ENCODE measurements at regions of chr7 and their contacts with region 1.

Region 1: DNA sequence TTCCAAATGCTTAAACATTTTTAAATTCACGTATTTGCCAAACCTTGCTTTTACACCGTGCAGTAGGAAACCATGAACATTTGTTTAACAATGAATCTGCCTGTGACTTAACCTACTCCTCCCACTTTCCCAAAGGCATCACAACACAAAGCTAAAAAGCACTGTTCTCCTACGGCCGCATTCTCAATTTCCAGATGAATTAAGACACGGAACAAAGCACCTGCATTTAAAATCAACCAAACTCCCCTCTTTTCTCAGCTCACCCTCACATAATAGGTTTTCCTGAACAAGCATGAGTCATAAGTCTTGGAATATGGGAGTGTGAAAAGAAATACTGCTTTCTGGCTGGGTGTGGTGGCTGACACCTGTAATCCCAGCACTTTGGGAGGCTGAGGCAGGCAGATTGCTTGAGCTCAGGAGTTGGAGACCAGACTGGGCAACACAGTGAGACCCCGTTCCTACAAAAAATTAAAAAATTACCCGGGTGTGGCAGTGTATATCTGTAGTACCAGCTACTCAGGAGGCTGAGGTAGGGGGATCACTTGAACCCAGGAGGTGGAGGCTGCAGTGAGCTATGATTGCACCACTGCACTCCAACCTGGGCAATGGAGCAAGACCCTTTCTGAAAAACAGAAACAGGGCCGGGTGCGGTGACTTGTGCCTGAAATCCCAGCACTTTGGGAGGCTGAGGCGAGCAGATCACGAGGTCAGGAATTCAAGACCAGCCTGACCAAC is 51.7 kb upstream of the CYTH3 start:
- DNase-seq: peak in 1 of 2 donors; percentile 12
- ATAC-seq: no peak
- H3K4me3 ChIP-seq: no peak overlapping the region
- H3K27ac ChIP-seq: no peak overlapping the region
- H3K4me1 ChIP-seq: no peaks in the 10 kb centered on the region
- H3K27me3 ChIP-seq: no peaks in the 10 kb centered on the region

Region 2: DNA sequence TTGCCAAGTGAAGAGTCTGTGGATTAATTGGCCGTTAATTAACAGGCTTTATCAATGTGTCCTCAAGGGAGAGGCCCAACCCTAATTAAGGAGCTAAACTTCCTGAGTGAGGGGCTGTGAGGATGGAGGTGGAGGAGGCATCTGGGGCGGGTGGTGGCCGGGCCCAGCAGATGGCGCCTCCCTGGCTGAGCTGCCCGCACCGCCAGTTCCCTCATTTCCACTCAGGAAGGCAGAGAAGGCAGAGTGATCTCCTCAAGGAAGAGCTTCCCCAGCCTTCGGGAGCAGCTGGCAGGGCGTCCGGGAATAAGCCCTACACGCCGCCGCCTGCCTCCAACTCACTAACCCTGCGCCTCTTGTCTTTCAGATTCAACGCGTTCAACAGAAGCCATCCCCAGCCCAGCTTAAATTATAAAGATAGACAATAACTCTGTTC is 163.9 kb before region 1 on chr7:
- intact Hi-C with region 1: loop called (anchors 1 to 2 kb)
- DNase-seq: peak; percentile 77 to 90
- ATAC-seq: peak; percentile 74
- H3K4me3 ChIP-seq: no peak overlapping the region
- H3K27ac ChIP-seq: no peak overlapping the region
- H3K4me1 ChIP-seq: no peaks in the 10 kb centered on the region
- H3K27me3 ChIP-seq: no peaks in the 10 kb centered on the region

Region 3: GRCh38 chr7:6367701-6368211 is 43.6 kb after region 1 on chr7:
- intact Hi-C with region 1: no loop called
- DNase-seq: no peak
- ATAC-seq: no peak
- H3K4me3 ChIP-seq: no peak overlapping the region
- H3K27ac ChIP-seq: no peak overlapping the region
- H3K4me1 ChIP-seq: no peaks in the 10 kb centered on the region
- H3K27me3 ChIP-seq: no peaks in the 10 kb centered on the region

Measured in aorta (tissue), 5 donors.